PC-9 (cell line): ENCODE measurements at regions of chr4 and their contacts with region 1.

Region 1: GRCh38 chr4:159175085-159175988 is 72.5 kb downstream of the RAPGEF2 start:
- DNase-seq: peak; percentile 64 to 81
- H3K4me3 ChIP-seq: peak overlapping the region; percentile 38; the same call in 1 of the 2 replicates
- H3K27ac ChIP-seq: peak overlapping the region; percentile 74
- H3K4me1 ChIP-seq: peaks cover 17% of the 10 kb centered on the region
- H3K27me3 ChIP-seq: no peaks in the 10 kb centered on the region
- CTCF ChIP-seq: peak; percentile 87

Region 2: GRCh38 chr4:158722917-158723793 is 452.2 kb before region 1 on chr4 and contains the start of gene PPID:
- CTCF ChIA-PET with region 1: no interaction called
- POLR2A ChIA-PET with region 1: no interaction called
- intact Hi-C with region 1: loop called (anchors 2 kb)
- DNase-seq: peak; percentile 71 to 83
- H3K4me3 ChIP-seq: peak within 1 kb of the TSS; percentile 65
- H3K27ac ChIP-seq: peak within 1 kb of the TSS; percentile 83
- H3K4me1 ChIP-seq: no peaks in the 10 kb centered on the region; the same call in 1 of the 2 replicates
- H3K27me3 ChIP-seq: no peaks in the 10 kb centered on the region
- CTCF ChIP-seq: no peak
- total RNA-seq, gene PPID: 21.4 and 28.2 TPM in 2 replicates

Region 3: GRCh38 chr4:158809611-158810486 is 365.5 kb before region 1 on chr4:
- CTCF ChIA-PET with region 1: no interaction called
- POLR2A ChIA-PET with region 1: interaction called, 3 read pairs
- intact Hi-C with region 1: loop called (anchors 1 kb)
- DNase-seq: peak; percentile 54 to 91
- H3K4me3 ChIP-seq: no peak overlapping the region
- H3K27ac ChIP-seq: peak overlapping the region; percentile 84
- H3K4me1 ChIP-seq: peaks cover 45% of the 10 kb centered on the region
- H3K27me3 ChIP-seq: no peaks in the 10 kb centered on the region
- CTCF ChIP-seq: no peak

Region 4: GRCh38 chr4:158856852-158857251 is 318.5 kb before region 1 on chr4:
- CTCF ChIA-PET with region 1: no interaction called
- POLR2A ChIA-PET with region 1: no interaction called
- intact Hi-C with region 1: loop called (anchors 1 kb)
- DNase-seq: peak in 1 of 2 experiments; percentile 52
- H3K4me3 ChIP-seq: no peak overlapping the region
- H3K27ac ChIP-seq: no peak overlapping the region
- H3K4me1 ChIP-seq: no peaks in the 10 kb centered on the region
- H3K27me3 ChIP-seq: no peaks in the 10 kb centered on the region
- CTCF ChIP-seq: peak; percentile 73

Region 5: DNA sequence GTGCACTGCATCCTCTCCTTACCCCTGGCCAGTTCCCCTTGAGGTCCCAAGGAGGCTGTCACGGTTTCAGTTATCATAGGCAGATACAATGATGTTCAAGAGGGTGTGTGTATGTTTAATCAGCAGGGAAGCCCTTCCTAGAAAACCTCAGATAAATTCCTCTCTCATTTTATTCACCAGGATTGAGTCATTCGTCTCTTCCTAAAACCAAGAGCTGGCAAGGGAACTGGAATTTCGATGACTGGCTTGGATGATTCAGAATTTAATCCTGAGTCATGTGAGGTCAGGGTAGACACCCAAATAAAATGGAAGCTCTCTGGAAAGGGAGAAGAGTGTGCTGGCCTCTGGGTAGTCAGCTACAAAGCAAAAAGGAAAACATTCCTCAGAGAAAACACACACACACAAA is 178.7 kb before region 1 on chr4:
- CTCF ChIA-PET with region 1: no interaction called
- POLR2A ChIA-PET with region 1: no interaction called
- intact Hi-C with region 1: loop called (anchors 2 kb)
- DNase-seq: peak; percentile 41 to 93
- H3K4me3 ChIP-seq: no peak overlapping the region
- H3K27ac ChIP-seq: peak overlapping the region; percentile 78
- H3K4me1 ChIP-seq: peaks cover 25% of the 10 kb centered on the region
- H3K27me3 ChIP-seq: no peaks in the 10 kb centered on the region
- CTCF ChIP-seq: no peak

Region 6: DNA sequence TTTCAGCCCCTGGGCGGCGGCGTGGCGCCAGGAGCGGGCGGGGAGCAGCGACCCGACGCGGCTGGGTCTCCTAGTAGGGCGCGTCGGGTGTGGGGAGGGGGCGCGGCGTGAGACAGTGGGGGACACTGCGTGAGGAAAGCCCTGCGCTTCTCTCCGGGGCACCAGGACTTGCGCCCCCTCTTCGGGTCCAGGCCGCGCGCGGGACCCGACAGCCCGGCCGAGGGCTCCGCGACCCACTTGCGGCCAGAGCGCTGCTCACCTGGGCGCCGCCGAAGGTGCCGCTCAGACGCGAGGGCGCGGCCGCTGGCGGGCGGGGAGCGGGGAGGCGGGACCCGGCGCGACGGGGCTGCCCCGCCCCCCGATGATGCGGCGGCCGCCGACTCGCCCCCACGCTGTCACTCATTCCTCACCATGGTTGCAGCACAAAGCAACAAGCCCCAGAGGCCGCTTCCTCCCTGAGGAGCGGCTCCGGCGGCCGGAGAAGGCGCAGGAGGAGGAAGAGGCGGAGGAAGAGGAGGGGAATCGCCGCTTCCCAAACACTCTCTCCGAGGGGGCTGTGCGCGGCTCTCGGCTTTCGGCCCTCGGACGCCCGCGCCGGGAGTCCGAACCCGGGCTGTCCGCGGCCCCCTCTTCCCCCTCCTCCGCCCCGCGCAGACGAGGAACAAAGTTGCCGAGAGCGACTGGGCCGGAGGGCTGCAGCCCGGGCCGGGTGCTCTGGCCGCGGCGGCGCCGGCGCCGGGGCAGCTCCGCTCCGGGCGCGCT is 72.5 kb before region 1 on chr4 and contains the start of gene RAPGEF2:
- CTCF ChIA-PET with region 1: interaction called, 6 read pairs
- POLR2A ChIA-PET with region 1: no interaction called
- intact Hi-C with region 1: loop called (anchors 1 kb)
- DNase-seq: peak; percentile 83 to 92
- H3K4me3 ChIP-seq: peak within 1 kb of the TSS; percentile 88
- H3K27ac ChIP-seq: peak within 1 kb of the TSS; percentile 77
- H3K4me1 ChIP-seq: peaks cover 34% of the 10 kb centered on the region
- H3K27me3 ChIP-seq: no peaks in the 10 kb centered on the region
- CTCF ChIP-seq: no peak
- total RNA-seq, gene RAPGEF2: 26.2 and 29.8 TPM in 2 replicates